ENCODE measurements at regions of chr2 and their contacts with region 1.

Region 1: GRCh38 chr2:227351639-227352038 is 26.6 kb downstream of the MFF start:
- DNase-seq: peak; percentile 21
- CTCF ChIP-seq: no peak

Region 2: DNA sequence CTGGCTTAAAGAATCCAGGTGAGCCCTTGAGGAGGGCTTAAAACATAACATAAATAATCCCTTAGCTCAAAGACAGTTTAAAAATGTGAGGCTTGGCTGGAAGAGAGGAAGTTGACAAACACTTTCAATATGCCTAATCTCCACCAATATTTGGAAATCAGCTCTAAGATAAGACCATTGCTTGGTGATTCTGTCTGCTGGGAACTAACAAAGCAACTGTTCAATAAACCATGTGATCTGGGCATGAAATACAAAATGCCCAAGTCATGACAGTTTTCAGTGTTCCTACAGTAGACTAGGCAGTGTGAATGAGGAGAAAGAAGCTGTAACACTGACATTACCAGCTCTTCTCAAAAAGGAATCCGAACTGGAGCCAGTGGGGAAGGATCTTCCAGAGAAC is 15.9 kb before region 1 on chr2:
- CTCF ChIA-PET with region 1: interaction called, 57 read pairs
- POLR2A ChIA-PET with region 1: interaction called, 3 read pairs
- DNase-seq: no peak
- CTCF ChIP-seq: no peak

Measured in GM10248 (cell line).